GM10248 (cell line): ENCODE measurements at regions of chr1 and their contacts with region 1.

Region 1: GRCh38 chr1:156096640-156097391 is 14.6 kb upstream of the MEX3A start:
- DNase-seq: peak; percentile 84
- CTCF ChIP-seq: peak; percentile 86

Region 2: DNA sequence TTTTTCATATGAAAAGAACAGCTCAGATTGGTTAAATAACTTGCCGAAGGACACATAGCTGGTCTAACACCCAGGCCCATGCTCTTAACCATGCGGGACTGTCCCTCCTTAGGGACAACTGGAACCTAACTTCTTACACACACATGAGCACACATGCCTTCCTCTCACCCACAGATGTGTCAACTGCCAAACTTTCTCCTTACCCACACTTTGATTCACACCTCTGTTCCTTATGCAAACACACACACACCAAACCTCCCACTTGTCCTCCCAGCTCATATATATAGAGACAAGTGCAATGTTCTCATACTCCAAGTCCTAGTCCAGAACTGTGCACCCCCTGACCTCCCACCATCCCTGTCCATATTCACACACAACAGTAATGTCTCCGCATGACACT is 31.6 kb before region 1 on chr1:
- CTCF ChIA-PET with region 1: interaction called, 11 read pairs
- POLR2A ChIA-PET with region 1: no interaction called
- DNase-seq: no peak
- CTCF ChIP-seq: no peak

Region 3: GRCh38 chr1:156082309-156083091 is 14.3 kb before region 1 on chr1 and contains the start of gene MEX3A:
- CTCF ChIA-PET with region 1: interaction called, 18 read pairs
- POLR2A ChIA-PET with region 1: no interaction called
- DNase-seq: peak; percentile 85
- CTCF ChIP-seq: no peak

Region 4: DNA sequence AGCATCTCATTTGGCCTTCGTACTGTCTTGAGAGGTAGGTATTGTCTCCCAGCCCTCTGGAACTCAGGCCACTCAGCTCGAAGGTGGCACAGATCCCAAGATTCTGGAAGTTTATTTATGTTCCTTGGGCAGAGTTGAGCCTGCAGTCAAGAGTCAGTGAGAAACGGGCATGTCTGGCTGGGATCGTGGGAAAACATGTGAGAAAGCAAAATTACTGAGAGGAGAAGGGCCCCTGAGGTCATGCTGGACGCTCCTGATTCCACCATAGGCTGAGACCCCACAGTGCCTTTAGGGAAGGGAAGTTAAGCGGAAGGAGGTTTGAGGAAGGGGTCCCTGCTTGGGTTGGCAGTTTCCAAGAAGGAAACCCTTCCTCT is 44.0 kb after region 1 on chr1:
- CTCF ChIA-PET with region 1: interaction called, 1,172 read pairs
- POLR2A ChIA-PET with region 1: no interaction called
- DNase-seq: no peak
- CTCF ChIP-seq: no peak

Region 5: GRCh38 chr1:156282479-156283222 is 185.8 kb after region 1 on chr1 and contains the start of gene SMG5:
- CTCF ChIA-PET with region 1: interaction called, 11 read pairs
- POLR2A ChIA-PET with region 1: no interaction called
- DNase-seq: peak; percentile 95
- CTCF ChIP-seq: no peak